Vagina (tissue), 2 donors: ENCODE measurements at regions of chr7 and their contacts with region 1.

Region 1: DNA sequence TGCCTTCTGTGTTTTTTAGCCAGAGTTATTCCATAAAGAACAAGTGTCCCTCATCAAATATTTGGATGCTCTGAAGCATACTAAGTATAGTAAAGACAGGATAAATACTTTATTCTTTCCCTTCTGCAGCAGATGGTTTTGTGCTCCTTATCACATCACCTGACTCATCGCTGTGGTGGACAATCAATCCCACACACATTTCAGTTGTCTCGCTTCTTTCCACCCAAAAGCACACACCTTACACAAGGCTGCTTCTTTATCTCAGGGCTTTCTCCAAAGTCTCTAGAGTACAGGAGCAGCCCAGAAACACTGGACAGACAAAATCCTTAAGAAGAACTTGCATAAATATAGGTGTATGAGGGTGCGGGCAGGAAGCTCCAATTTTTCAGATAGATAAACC is 43.4 kb downstream of the IGF2BP3 start:
- DNase-seq: no peak
- H3K4me3 ChIP-seq: no peak overlapping the region
- H3K27ac ChIP-seq: no peak overlapping the region
- H3K4me1 ChIP-seq: no peaks in the 10 kb centered on the region
- H3K27me3 ChIP-seq: no peaks in the 10 kb centered on the region
- CTCF ChIP-seq: no peak
- POLR2A ChIP-seq: no peak

Region 2: DNA sequence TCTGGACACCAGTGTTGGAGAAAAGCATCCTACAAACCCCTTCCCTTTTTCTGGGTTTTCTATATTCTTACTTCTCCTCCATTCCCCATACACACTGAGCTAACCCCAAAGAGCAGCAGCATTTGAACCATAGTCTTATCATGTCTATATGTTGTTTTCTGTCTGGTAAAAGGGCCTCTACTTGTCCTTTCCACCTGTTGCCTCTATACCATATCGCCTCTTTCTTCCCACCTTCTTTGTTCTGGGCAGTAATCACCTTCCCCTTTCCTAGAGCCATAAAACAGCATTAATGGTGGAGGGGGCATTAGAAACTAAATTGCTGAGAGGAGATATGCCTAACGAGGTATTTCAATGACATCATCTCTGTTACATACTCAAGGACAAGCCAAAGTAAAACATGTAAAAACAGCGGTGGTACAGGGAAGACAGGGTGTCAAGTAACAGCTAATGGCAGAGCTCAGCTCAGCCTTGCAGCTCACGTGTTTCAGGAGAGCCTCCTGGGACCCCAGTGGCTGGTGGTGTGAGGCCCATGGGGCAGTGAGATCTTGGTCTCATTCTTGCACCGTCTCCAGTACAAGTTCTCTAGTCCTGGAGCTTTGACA is 877.7 kb after region 1 on chr7:
- intact Hi-C with region 1: no loop called
- DNase-seq: no peak
- H3K4me3 ChIP-seq: no peak overlapping the region
- H3K27ac ChIP-seq: no peak overlapping the region
- H3K4me1 ChIP-seq: no peaks in the 10 kb centered on the region
- H3K27me3 ChIP-seq: no peaks in the 10 kb centered on the region
- CTCF ChIP-seq: no peak
- POLR2A ChIP-seq: no peak

Region 3: GRCh38 chr7:24794751-24795731 is 1368.2 kb after region 1 on chr7:
- intact Hi-C with region 1: loop called (anchors 5 kb)
- DNase-seq: no peak
- H3K4me3 ChIP-seq: no peak overlapping the region
- H3K27ac ChIP-seq: no peak overlapping the region
- H3K4me1 ChIP-seq: no peaks in the 10 kb centered on the region
- H3K27me3 ChIP-seq: no peaks in the 10 kb centered on the region
- CTCF ChIP-seq: no peak
- POLR2A ChIP-seq: no peak